ENCODE measurements at regions of chr1 and their contacts with region 1.

Region 1: GRCh38 chr1:86429835-86430234 is 5.9 kb downstream of the CLCA2 start:
- DNase-seq: peak; percentile 33
- H3K4me3 Mint-ChIP-seq: no peak overlapping the region
- H3K27ac Mint-ChIP-seq: no peak overlapping the region
- H3K4me1 Mint-ChIP-seq: no peaks in the 10 kb centered on the region
- H3K27me3 Mint-ChIP-seq: peaks cover 12% of the 10 kb centered on the region

Region 2: DNA sequence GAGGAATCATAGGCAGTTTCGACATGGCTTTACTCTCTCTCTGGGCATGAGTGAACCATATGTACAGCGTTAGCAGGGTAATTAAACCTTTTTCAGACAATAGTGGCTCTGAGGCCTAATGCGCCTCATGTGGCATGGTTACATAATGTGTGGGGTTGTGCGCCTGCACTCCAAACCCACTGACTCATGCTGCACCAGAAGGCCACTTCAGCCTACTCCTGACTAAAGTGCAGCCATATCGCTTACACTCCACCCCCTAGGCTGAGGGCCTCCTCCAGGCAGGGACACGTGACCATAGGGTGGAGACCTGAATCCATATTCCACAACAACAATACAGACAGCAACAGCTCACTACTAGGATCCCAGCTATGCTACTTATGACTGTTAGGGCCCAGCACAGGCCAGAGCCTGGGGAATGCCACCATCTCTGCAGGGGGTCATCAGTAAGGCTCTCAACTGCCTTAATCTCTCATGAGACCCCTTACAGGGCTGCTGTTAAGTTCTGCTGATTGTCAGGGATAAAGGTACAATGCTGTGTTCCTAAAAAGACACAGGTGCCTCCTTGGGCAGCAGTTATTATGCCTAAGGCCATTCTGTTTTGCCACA is 20.3 kb before region 1 on chr1:
- CTCF ChIA-PET with region 1: no interaction called
- POLR2A ChIA-PET with region 1: no interaction called
- DNase-seq: no peak
- H3K4me3 Mint-ChIP-seq: no peak overlapping the region
- H3K27ac Mint-ChIP-seq: no peak overlapping the region
- H3K4me1 Mint-ChIP-seq: no peaks in the 10 kb centered on the region
- H3K27me3 Mint-ChIP-seq: peaks cover 3% of the 10 kb centered on the region

Region 3: DNA sequence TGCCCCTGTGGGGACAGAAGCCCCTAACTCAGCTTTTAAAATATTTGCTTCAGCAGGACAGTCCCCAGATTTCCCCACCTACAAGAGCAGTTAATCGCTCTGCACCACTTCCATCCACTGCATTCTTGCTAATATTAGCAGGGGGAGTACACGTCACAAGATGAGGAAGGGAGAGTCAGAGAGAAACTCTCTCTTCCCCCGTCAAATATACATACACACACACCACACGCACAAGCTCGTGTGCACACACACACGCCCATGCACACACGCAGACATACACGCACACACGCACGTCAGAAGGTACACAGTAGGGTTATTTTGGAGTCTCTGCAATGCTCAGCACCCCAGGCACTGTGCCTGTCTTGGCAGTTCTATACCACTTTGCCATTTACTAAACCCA is 41.0 kb after region 1 on chr1:
- CTCF ChIA-PET with region 1: interaction called, 10 read pairs
- POLR2A ChIA-PET with region 1: no interaction called
- DNase-seq: no peak
- H3K4me3 Mint-ChIP-seq: no peak overlapping the region
- H3K27ac Mint-ChIP-seq: no peak overlapping the region
- H3K4me1 Mint-ChIP-seq: no peaks in the 10 kb centered on the region
- H3K27me3 Mint-ChIP-seq: peaks cover 18% of the 10 kb centered on the region

Region 4: GRCh38 chr1:86596741-86597290 is 167.0 kb after region 1 on chr1:
- CTCF ChIA-PET with region 1: no interaction called
- POLR2A ChIA-PET with region 1: no interaction called
- DNase-seq: no peak
- H3K4me3 Mint-ChIP-seq: no peak overlapping the region
- H3K27ac Mint-ChIP-seq: no peak overlapping the region
- H3K4me1 Mint-ChIP-seq: no peaks in the 10 kb centered on the region
- H3K27me3 Mint-ChIP-seq: no peaks in the 10 kb centered on the region

Measured in activated CD4-positive, alpha-beta memory T cell treated with anti-CD3 and anti-CD28 coated beads, Interleukin-2, amount 10 ng/mL, durations not matched to agents 7 days and 5 days (primary cell).